K562 (cell line): ENCODE measurements at regions of chr19 and their contacts with region 1.

Region 1: GRCh38 chr19:7943444-7944176 is at the start of gene TIMM44:
- DNase-seq: peak; percentile 97 to 99 (median 98)
- ATAC-seq: peak; percentile 99
- H3K4me3 ChIP-seq: peak within 1 kb of the TSS; percentile 64
- H3K27ac ChIP-seq: peak within 1 kb of the TSS; percentile 94
- H3K4me1 ChIP-seq: peaks cover 11 to 28% of the 10 kb centered on the region in 2 experiments; a peak in 4 of 5 replicates
- H3K27me3 ChIP-seq: no peaks in the 10 kb centered on the region
- CTCF ChIP-seq: no peak
- EP300 ChIP-seq: peak; percentile 2; the same call in 1 of the 2 replicates
- POLR2A ChIP-seq: peak; percentile 95
- RAD21 ChIP-seq: peak in 1 of 2 experiments; percentile 6; a peak in 1 of 4 replicates
- polyA plus RNA-seq, gene TIMM44: 10.3 to 19.6 TPM

Region 2: DNA sequence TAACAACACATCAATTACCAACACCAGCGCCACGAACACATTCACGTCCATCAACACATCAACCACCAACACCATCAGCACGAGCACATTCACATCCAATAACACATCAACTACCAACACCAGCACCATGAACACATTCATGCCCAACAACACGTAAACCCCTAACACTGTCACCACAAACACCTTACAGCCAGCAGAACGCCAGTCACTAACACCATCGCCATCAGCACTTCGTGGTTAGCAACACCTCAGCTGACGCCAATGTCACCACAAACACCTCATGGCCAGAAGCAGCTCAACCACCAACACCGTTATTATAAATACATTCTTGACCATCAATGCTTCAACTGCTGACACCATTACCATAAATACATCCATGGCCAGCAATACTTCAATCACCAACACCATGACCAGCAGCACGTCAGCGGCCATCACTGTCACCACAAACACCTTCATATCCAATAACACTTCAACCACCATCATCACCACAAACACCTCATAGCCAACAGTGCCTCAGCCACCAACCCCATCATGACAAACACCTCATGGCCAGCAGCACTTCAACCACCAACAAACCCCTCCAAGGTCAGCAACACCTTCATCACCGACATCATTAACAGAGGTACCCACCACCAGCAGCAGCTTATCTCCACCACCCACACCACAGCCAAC is 251.1 kb before region 1 on chr19:
- CTCF ChIA-PET with region 1: no interaction called
- POLR2A ChIA-PET with region 1: no interaction called
- in situ Hi-C with region 1: no loop called
- intact Hi-C with region 1: no loop called
- DNase-seq: no peak
- ATAC-seq: no peak
- H3K4me3 ChIP-seq: no peak overlapping the region
- H3K27ac ChIP-seq: no peak overlapping the region
- H3K4me1 ChIP-seq: peaks cover 0 to 8% of the 10 kb centered on the region in 2 experiments; a peak in 2 of 5 replicates
- H3K27me3 ChIP-seq: peaks cover 12 to 70% of the 10 kb centered on the region in 2 experiments; a peak in 4 of 5 replicates
- CTCF ChIP-seq: no peak
- EP300 ChIP-seq: no peak
- POLR2A ChIP-seq: no peak
- RAD21 ChIP-seq: no peak

Region 3: GRCh38 chr19:7919610-7920518 is 23.7 kb before region 1 on chr19 and contains the start of gene SNAPC2:
- CTCF ChIA-PET with region 1: no interaction called
- POLR2A ChIA-PET with region 1: interaction called, 21 read pairs
- in situ Hi-C with region 1: no loop called
- intact Hi-C with region 1: no loop called
- DNase-seq: peak; percentile 81 to 99 (median 85)
- ATAC-seq: peak; percentile 86
- H3K4me3 ChIP-seq: peak within 1 kb of the TSS; percentile 81
- H3K27ac ChIP-seq: peak within 1 kb of the TSS; percentile 89
- H3K4me1 ChIP-seq: peaks cover 9 to 73% of the 10 kb centered on the region in 2 experiments
- H3K27me3 ChIP-seq: no peaks in the 10 kb centered on the region
- CTCF ChIP-seq: peak in 2 of 3 experiments; percentile 5 to 21; a peak in 2 of 6 replicates
- EP300 ChIP-seq: no peak
- POLR2A ChIP-seq: peak; percentile 81
- RAD21 ChIP-seq: no peak
- polyA plus RNA-seq, gene SNAPC2: 0.59 to 1.4 TPM

Region 4: DNA sequence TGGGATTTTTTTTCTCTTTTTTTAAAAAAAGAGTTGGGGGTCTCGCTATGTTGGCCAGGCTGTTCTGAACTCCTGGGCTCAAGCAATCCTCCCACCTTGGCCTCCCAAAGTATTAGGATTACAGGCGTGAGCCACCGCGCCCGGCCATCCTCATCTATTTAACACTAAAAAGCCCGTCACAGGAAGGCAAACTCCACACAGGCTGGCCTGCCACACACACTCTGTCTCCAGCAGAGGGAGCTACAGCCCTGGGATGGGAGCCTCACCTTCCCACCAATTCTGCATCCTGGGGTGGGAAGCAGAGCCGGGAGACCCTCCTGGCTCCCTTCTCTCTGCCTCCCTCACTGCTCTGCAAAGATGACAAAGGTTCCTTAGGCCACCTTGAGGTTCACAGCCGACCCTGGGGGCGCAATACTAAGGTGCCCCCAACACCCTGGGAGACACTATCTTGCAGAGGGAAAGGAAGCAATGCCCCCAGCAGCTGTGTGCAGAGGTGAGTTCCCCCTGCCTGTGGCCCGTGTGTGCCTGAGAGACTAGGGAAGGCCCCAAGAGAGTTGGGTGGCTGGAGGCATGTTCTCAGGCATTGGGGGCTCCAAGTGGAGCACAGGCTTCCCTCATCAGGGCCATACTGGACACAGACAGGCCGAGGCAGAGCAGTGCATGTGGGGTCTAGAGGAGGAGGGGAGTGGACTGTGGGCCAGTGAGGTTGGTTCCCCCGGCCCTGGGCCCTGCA is 27.3 kb after region 1 on chr19:
- CTCF ChIA-PET with region 1: interaction called, 5 read pairs
- POLR2A ChIA-PET with region 1: interaction called, 15 read pairs
- in situ Hi-C with region 1: no loop called
- intact Hi-C with region 1: no loop called
- DNase-seq: peak; percentile 54 to 64 (median 58)
- ATAC-seq: peak; percentile 91
- H3K4me3 ChIP-seq: no peak overlapping the region
- H3K27ac ChIP-seq: no peak overlapping the region
- H3K4me1 ChIP-seq: peaks cover 0 to 4% of the 10 kb centered on the region in 2 experiments; a peak in 2 of 5 replicates
- H3K27me3 ChIP-seq: no peaks in the 10 kb centered on the region
- CTCF ChIP-seq: peak; percentile 71 to 81 (median 78)
- EP300 ChIP-seq: no peak
- POLR2A ChIP-seq: 0 out of 2 replicates have a peak, but pooled peaks have one; percentile 24
- RAD21 ChIP-seq: peak; percentile 54 to 76

Region 5: DNA sequence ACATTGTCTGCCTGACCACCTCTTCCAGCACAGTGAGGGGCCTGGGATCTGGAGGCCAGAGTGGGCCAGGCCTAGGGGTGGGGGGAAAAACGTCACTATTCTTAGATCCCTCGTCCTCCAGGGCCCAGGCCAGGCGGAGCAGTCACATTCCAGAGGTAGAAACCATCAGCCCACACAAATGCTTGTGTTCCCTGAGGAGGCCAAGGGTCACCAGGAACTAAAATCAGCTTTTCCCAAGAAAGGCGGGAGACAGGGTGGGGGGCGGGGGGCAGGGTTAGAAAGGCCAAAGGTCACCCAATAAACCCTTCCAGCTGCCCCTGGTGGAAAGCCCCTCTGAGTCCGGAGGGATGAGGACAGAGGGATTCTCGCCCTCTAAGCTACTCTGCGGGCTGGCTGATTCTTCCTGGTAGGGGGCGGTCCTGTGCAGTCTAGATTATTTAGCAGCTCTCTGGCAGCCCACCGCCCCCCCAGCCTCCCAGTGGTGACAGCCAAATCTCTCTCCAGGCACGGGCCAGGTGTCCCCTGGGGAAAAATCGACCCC is 85.4 kb after region 1 on chr19:
- CTCF ChIA-PET with region 1: no interaction called
- POLR2A ChIA-PET with region 1: no interaction called
- in situ Hi-C with region 1: no loop called
- intact Hi-C with region 1: no loop called
- DNase-seq: peak; percentile 29 to 47 (median 42)
- ATAC-seq: peak; percentile 24; the same call in 1 of the 3 replicates
- H3K4me3 ChIP-seq: no peak overlapping the region
- H3K27ac ChIP-seq: no peak overlapping the region
- H3K4me1 ChIP-seq: peaks cover 9 to 28% of the 10 kb centered on the region in 2 experiments
- H3K27me3 ChIP-seq: no peaks in the 10 kb centered on the region
- CTCF ChIP-seq: peak in 2 of 3 experiments; percentile 23 to 32; a peak in 3 of 6 replicates
- EP300 ChIP-seq: no peak
- POLR2A ChIP-seq: no peak
- RAD21 ChIP-seq: no peak

Region 6: GRCh38 chr19:8069096-8069973 is 125.7 kb after region 1 on chr19:
- CTCF ChIA-PET with region 1: interaction called, 7 read pairs
- POLR2A ChIA-PET with region 1: interaction called, 7 read pairs
- in situ Hi-C with region 1: no loop called
- intact Hi-C with region 1: loop called (anchors 10 kb)
- DNase-seq: peak; percentile 49 to 71 (median 51)
- ATAC-seq: peak; percentile 46; the same call in 2 of the 3 replicates
- H3K4me3 ChIP-seq: no peak overlapping the region
- H3K27ac ChIP-seq: no peak overlapping the region
- H3K4me1 ChIP-seq: peaks cover 0 to 14% of the 10 kb centered on the region in 2 experiments; a peak in 2 of 5 replicates
- H3K27me3 ChIP-seq: no peaks in the 10 kb centered on the region
- CTCF ChIP-seq: peak; percentile 73 to 93 (median 84)
- EP300 ChIP-seq: no peak
- POLR2A ChIP-seq: no peak
- RAD21 ChIP-seq: peak; percentile 80 to 90

Region 7: DNA sequence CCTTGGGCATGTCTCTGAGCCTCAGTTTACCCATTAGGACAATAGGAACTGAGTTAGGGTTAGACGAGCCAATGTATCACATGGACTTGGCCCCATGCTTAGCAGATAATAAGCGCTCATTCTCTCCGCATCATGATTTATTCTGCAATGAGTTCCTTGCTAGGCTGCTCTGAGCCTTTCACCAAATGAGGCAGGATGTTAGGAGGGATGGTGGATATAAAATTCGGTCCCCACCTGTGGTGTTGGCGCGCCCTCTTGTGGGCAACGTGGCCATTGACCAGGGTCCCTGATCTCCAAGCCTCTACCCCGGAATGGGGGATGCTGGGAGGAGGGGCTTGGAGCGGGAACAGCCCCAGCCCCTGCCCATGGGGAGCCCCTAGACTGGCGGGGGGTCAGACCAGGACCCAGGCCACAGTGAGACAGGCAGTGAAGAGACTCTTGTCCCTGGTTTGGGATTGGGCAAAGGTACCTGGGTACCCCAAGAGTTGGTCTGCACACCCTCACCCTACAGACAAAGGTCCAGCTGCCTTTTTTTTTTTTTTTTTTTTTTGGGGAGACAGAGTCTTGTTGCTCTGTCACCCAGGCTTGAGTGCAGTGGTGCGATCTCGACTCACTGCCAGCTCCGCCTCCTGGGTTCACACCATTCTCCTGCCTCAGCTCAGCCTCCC is 309.4 kb after region 1 on chr19:
- CTCF ChIA-PET with region 1: interaction called, 16 read pairs
- POLR2A ChIA-PET with region 1: no interaction called
- in situ Hi-C with region 1: loop called (anchors 5 kb)
- intact Hi-C with region 1: loop called (anchors 1 kb)
- DNase-seq: peak; percentile 88 to 90 (median 90)
- ATAC-seq: peak; percentile 90
- H3K4me3 ChIP-seq: no peak overlapping the region
- H3K27ac ChIP-seq: no peak overlapping the region
- H3K4me1 ChIP-seq: peaks cover 13 to 42% of the 10 kb centered on the region in 2 experiments; a peak in 4 of 5 replicates
- H3K27me3 ChIP-seq: no peaks in the 10 kb centered on the region
- CTCF ChIP-seq: peak; percentile 95 to 97 (median 97)
- EP300 ChIP-seq: no peak
- POLR2A ChIP-seq: no peak
- RAD21 ChIP-seq: peak; percentile 98 to 99